ENCODE measurements at regions of chr19 and their contacts with region 1.

Region 1: GRCh38 chr19:10403137-10404021 is at the start of gene CDC37:
- DNase-seq: peak; percentile 98
- H3K4me3 ChIP-seq: peak within 1 kb of the TSS; percentile 95 to 98 (median 95)
- H3K27ac ChIP-seq: peak within 1 kb of the TSS; percentile 88
- H3K4me1 ChIP-seq: peaks cover 15% of the 10 kb centered on the region
- H3K27me3 ChIP-seq: peaks cover 12 to 23% of the 10 kb centered on the region in 2 experiments
- CTCF ChIP-seq: no peak
- POLR2A ChIP-seq: peak; percentile 97
- total RNA-seq, gene CDC37: 275 and 300 TPM in 2 replicates

Region 2: DNA sequence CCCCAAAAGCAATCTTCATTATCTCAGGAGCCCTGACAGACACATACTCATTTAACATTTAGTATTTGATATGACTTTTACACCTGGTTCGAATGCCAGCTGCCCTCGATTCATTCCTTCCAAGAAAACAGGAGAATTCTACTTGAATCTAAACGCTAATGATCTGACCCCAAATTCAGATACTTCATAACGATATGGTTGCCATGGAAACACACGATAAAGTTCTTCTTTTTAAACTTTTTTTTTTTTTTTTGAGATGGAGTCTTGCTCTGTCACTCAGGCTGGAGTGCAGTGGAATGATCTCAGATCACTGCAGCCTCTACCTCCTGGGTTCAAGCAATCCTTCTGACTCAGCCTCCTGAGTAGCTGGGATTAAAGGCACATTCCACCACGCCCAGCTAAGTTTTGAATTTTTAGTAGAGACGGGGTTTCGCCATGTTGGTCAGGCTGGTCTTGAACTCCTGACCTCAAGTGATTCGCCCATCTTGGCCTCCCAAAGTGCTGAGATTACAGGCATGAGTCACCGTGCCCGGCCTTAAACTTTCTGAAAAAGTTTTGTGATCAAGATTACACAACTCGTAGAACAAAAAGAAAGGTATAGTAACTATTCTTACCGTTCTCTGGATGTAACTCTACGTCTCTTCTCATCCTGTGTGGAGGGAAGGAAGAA is 230.0 kb before region 1 on chr19:
- CTCF ChIA-PET with region 1: no interaction called
- POLR2A ChIA-PET with region 1: no interaction called
- dilution Hi-C with region 1: no loop called
- intact Hi-C with region 1: no loop called
- DNase-seq: no peak
- H3K4me3 ChIP-seq: no peak overlapping the region
- H3K27ac ChIP-seq: no peak overlapping the region
- H3K4me1 ChIP-seq: no peaks in the 10 kb centered on the region
- H3K27me3 ChIP-seq: no peaks in the 10 kb centered on the region
- CTCF ChIP-seq: no peak
- POLR2A ChIP-seq: no peak

Region 3: DNA sequence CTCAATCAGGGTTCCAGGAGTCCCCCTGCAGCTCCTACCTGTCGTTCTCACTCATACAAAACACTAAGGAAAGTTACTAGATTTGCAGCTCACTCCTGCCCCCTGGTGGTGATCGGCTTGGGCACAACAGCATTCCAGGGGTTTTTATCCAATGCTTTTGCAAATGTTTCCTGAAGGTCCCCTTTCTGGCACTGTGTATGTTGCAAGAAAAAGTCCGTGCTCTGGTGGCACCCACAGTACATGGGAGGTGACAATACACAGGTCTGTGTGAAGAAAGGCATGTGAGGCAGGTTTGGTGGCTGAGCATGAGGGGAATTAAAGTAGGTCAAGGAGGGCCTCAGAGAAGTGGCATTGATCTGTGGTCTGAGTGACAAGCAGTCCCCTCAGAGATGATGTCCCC is 14.4 kb before region 1 on chr19:
- CTCF ChIA-PET with region 1: interaction called, 33 read pairs
- POLR2A ChIA-PET with region 1: no interaction called
- dilution Hi-C with region 1: no loop called
- intact Hi-C with region 1: no loop called
- DNase-seq: peak; percentile 85
- H3K4me3 ChIP-seq: no peak overlapping the region
- H3K27ac ChIP-seq: no peak overlapping the region
- H3K4me1 ChIP-seq: no peaks in the 10 kb centered on the region
- H3K27me3 ChIP-seq: no peaks in the 10 kb centered on the region
- CTCF ChIP-seq: peak; percentile 88 to 93
- POLR2A ChIP-seq: peak; percentile 43

Region 4: GRCh38 chr19:10424011-10424637 is 20.7 kb after region 1 on chr19:
- CTCF ChIA-PET with region 1: interaction called, 50 read pairs
- POLR2A ChIA-PET with region 1: no interaction called
- dilution Hi-C with region 1: no loop called
- intact Hi-C with region 1: loop called (anchors 1 kb)
- DNase-seq: peak; percentile 73
- H3K4me3 ChIP-seq: peak overlapping the region in 1 of 3 experiments; percentile 20
- H3K27ac ChIP-seq: no peak overlapping the region
- H3K4me1 ChIP-seq: peaks cover 27% of the 10 kb centered on the region
- H3K27me3 ChIP-seq: peaks cover 24 to 34% of the 10 kb centered on the region in 2 experiments
- CTCF ChIP-seq: peak; percentile 95 to 96
- POLR2A ChIP-seq: no peak

Region 5: GRCh38 chr19:10439588-10439987 is 36.2 kb after region 1 on chr19:
- CTCF ChIA-PET with region 1: interaction called, 17 read pairs
- POLR2A ChIA-PET with region 1: interaction called, 3 read pairs
- dilution Hi-C with region 1: no loop called
- intact Hi-C with region 1: loop called (anchors 5 kb)
- DNase-seq: no peak
- H3K4me3 ChIP-seq: no peak overlapping the region
- H3K27ac ChIP-seq: no peak overlapping the region
- H3K4me1 ChIP-seq: no peaks in the 10 kb centered on the region
- H3K27me3 ChIP-seq: no peaks in the 10 kb centered on the region
- CTCF ChIP-seq: no peak
- POLR2A ChIP-seq: no peak

Region 6: GRCh38 chr19:10565567-10566407 is 162.4 kb after region 1 on chr19 and contains the start of gene KRI1:
- CTCF ChIA-PET with region 1: interaction called, 3 read pairs
- POLR2A ChIA-PET with region 1: no interaction called
- dilution Hi-C with region 1: no loop called
- intact Hi-C with region 1: loop called (anchors 2 kb)
- DNase-seq: peak; percentile 98
- H3K4me3 ChIP-seq: peak within 1 kb of the TSS; percentile 75 to 99 (median 78)
- H3K27ac ChIP-seq: peak within 1 kb of the TSS; percentile 64
- H3K4me1 ChIP-seq: peaks cover 27% of the 10 kb centered on the region
- H3K27me3 ChIP-seq: no peaks in the 10 kb centered on the region
- CTCF ChIP-seq: peak; percentile 10 to 55
- POLR2A ChIP-seq: peak; percentile 92
- total RNA-seq, gene KRI1: 23.1 and 25.7 TPM in 2 replicates

Measured in endothelial cell of umbilical vein (primary cell).